ENCODE measurements at regions of chr16 and their contacts with region 1.

Region 1: GRCh38 chr16:9047686-9048301 is 43.6 kb upstream of the HAPSTR1 start:
- DNase-seq: peak; percentile 62
- ATAC-seq: peak; percentile 76
- H3K4me3 ChIP-seq: no peak overlapping the region
- H3K27ac ChIP-seq: peak overlapping the region; percentile 22; the same call in 1 of the 2 replicates
- H3K4me1 ChIP-seq: peaks cover 23% of the 10 kb centered on the region
- H3K27me3 ChIP-seq: no peaks in the 10 kb centered on the region
- CTCF ChIP-seq: no peak
- EP300 ChIP-seq: no peak; a peak in 1 of 4 replicates
- POLR2A ChIP-seq: no peak
- RAD21 ChIP-seq: no peak

Region 2: DNA sequence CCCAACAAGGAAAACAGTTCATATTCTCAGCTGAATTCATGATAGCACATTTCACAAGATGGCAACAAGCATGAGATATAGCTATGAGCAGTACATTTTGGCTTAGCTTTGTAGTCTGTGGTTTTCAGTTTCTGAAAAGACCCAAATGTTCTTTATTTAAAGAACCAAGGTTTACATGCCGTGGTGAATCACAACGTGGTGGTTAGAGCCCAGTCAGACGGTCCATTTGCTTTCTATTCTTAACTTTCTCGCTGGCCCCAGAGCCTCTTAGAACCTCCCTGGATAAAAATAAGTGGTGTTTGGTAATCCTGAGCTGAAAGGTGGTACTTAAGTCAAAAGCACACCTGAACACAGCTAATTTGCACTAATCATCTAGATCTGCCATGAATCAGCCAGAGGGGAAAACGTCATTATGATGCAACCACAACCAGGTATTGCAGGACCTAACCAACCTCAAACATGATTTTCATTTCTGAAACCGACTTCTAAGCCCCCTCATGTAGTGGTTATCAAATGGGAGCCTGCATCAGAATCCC is 25.1 kb after region 1 on chr16:
- CTCF ChIA-PET with region 1: interaction called, 5 read pairs
- POLR2A ChIA-PET with region 1: no interaction called
- RAD21 ChIA-PET with region 1: interaction called, 3 read pairs
- SMC1A ChIA-PET with region 1: interaction called, 10 read pairs
- in situ Hi-C with region 1: no loop called
- intact Hi-C with region 1: no loop called
- DNase-seq: peak; percentile 44
- ATAC-seq: peak; percentile 86
- H3K4me3 ChIP-seq: peak overlapping the region; percentile 64
- H3K27ac ChIP-seq: peak overlapping the region; percentile 78
- H3K4me1 ChIP-seq: peaks cover 28% of the 10 kb centered on the region
- H3K27me3 ChIP-seq: no peaks in the 10 kb centered on the region
- CTCF ChIP-seq: no peak
- EP300 ChIP-seq: no peak
- POLR2A ChIP-seq: no peak
- RAD21 ChIP-seq: no peak

Measured in GM12878 (cell line).